GM13976 (cell line): ENCODE measurements at regions of chr4 and their contacts with region 1.

Region 1: GRCh38 chr4:81084029-81084428 is 53.5 kb downstream of the BMP3 start:
- DNase-seq: no peak
- CTCF ChIP-seq: no peak

Region 2: GRCh38 chr4:80577991-80578390 is 506.0 kb before region 1 on chr4:
- in situ Hi-C with region 1: no loop called
- DNase-seq: no peak
- CTCF ChIP-seq: no peak

Region 3: GRCh38 chr4:81335122-81335912 is 251.3 kb after region 1 on chr4:
- in situ Hi-C with region 1: loop called (anchors 25 kb)
- DNase-seq: no peak
- CTCF ChIP-seq: no peak